Naive thymus-derived CD4-positive, alpha-beta T cell (primary cell): ENCODE measurements at regions of chr7 and their contacts with region 1.

Region 1: DNA sequence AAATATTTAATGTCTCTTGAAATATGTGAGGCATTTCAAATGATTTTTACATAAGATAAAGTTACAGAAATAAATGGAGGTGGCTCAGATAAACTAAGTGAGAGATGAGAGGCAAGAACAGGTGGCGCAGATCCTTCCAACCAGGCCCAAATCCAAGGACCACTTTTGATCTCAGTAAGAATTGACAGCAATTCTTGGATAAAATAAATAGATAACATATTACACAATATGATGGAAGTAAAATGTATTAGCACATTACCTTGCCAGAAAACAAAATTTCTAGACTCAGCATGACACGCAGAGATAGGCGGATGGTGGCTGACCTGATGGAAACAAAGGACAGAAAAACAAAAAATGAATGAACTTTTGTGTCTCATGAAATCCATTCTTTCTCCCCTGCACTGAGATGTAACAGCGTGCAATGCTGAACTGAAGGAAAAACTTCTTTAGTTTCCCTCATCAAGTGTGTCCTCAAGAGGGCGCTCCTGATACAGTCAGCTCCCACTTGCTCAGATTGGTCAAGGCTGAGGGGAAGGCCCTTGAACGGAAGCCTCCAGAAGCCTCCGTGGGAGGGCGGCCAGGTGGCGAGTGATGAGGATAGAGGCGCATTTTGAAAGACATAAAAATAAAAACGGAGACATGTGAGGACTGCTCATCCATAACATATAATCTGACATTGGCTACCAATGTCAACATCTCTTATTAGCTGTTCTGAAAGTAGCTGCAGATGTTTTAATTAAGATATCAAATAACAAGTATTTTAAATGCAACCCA is 62.8 kb upstream of the GSDME start:
- DNase-seq: peak; percentile 33 to 72 (median 68)
- ATAC-seq: peak; percentile 58
- H3K4me3 ChIP-seq: peak overlapping the region; percentile 24
- H3K4me3 Mint-ChIP-seq: peak overlapping the region; percentile 70 to 93 (median 83)
- H3K27ac ChIP-seq: peak overlapping the region; percentile 70
- H3K27ac Mint-ChIP-seq: peak overlapping the region; percentile 91 to 99 (median 94)
- H3K4me1 ChIP-seq: peaks cover 27 to 28% of the 10 kb centered on the region in 2 donors
- H3K4me1 Mint-ChIP-seq: peaks cover 13 to 47% (median 45%) of the 10 kb centered on the region in 7 donors
- H3K27me3 ChIP-seq: no peaks in the 10 kb centered on the region
- H3K27me3 Mint-ChIP-seq: no peaks in the 10 kb centered on the region

Region 2: DNA sequence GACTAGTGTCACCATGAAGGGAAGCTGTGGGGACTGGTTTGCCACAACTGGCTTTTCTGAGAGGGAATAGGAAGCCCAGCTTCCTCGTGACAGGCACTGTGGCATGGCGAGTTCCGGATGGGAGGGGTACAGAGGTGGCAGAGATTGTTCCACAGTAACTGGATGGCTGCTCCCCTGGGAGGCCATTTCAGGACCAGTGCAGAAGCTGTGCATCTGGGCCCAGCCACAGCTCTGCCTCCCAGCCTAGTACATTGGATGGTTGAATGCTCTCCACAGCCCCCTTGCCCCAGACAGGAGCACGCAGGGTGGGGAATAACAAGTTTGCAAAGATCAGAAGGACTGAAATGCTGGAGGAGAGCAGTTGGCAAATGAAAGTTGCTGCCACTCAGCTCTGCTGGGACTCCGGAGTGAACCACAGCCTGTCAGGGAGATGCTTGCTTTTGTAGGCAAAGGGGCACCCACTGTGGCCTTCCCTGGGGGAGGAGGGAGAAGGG is 114.6 kb before region 1 on chr7:
- CTCF ChIA-PET with region 1: no interaction called
- POLR2A ChIA-PET with region 1: no interaction called
- intact Hi-C with region 1: no loop called
- DNase-seq: no peak
- ATAC-seq: peak; percentile 44
- H3K4me3 ChIP-seq: no peak overlapping the region
- H3K4me3 Mint-ChIP-seq: no peak overlapping the region
- H3K27ac ChIP-seq: no peak overlapping the region
- H3K27ac Mint-ChIP-seq: peak overlapping the region in 1 of 9 donors; percentile 36
- H3K4me1 ChIP-seq: no peaks in the 10 kb centered on the region
- H3K4me1 Mint-ChIP-seq: peaks cover 0 to 7% (median 0%) of the 10 kb centered on the region in 7 donors
- H3K27me3 ChIP-seq: no peaks in the 10 kb centered on the region
- H3K27me3 Mint-ChIP-seq: no peaks in the 10 kb centered on the region

Region 3: DNA sequence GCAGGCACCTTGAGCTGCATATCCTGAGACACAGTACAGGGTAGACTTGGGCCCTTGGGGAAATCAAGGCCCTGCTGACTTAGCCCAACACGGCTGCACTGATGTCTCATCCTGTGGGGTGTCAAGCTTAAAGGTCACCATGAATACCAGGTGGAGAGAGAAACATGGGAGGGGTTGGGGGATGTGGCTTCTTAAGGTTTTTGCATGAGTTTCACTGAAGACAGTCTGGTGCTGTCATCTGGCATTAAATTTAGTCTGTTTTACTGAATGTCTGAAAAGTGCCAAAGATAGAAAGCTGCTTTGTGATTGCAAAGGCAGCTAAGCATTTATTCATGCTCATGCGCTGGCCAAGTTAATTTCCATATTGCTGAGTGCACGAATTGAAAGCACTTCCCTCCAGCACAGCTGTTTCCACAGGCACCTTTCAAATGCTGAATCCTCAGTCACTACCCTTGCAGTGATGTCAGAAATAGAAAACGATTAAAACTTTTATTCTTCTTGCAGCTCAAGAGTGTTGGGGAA is 57.7 kb after region 1 on chr7:
- CTCF ChIA-PET with region 1: interaction called, 4 read pairs
- POLR2A ChIA-PET with region 1: no interaction called
- intact Hi-C with region 1: loop called in 1 of 2 experiments (anchors 2 kb)
- DNase-seq: peak in 1 of 9 donors; percentile 24
- ATAC-seq: peak; percentile 42
- H3K4me3 ChIP-seq: no peak overlapping the region
- H3K4me3 Mint-ChIP-seq: peak overlapping the region in 1 of 10 donors; percentile 49
- H3K27ac ChIP-seq: no peak overlapping the region
- H3K27ac Mint-ChIP-seq: peak overlapping the region in 2 of 9 donors; percentile 59 to 72
- H3K4me1 ChIP-seq: no peaks in the 10 kb centered on the region
- H3K4me1 Mint-ChIP-seq: peaks cover 0 to 53% (median 0%) of the 10 kb centered on the region in 7 donors
- H3K27me3 ChIP-seq: no peaks in the 10 kb centered on the region
- H3K27me3 Mint-ChIP-seq: no peaks in the 10 kb centered on the region

Region 4: DNA sequence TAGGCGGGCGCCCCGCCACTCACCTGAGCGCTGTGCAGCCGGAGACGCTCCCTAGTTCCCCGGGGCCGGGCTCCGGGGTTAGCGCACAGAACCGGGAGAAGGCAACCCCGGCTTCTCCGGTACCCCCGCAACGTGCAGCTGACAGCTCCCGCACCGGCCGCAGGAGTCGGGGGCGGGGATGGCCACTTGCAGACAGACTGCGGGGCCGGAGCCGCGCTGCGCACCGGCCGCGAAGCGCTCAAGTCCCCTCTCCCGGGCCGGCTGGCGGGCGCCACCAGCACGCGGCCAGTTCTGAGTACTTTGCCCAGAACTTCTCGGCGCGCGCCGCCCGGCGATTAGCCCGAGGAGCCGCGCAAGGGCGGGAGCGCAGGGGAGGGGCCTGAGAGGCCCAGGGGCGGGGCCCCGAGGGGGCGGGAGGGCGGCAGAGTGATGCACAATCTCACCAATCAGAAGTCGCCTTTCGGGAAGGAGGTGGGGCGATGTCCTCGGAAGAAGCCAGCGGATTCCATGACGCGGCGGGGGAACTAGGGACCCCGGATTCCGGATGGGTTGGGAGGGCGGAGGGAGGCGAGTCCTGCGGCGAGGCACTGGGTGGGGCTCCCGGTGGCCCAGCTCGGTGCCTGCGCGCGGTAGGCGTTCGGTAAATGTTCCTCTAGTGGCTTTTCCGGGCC is 159.9 kb after region 1 on chr7 and contains the start of gene OSBPL3:
- CTCF ChIA-PET with region 1: interaction called, 44 read pairs
- POLR2A ChIA-PET with region 1: interaction called, 25 read pairs
- intact Hi-C with region 1: loop called (anchors 1 kb)
- DNase-seq: peak; percentile 86 to 96 (median 93)
- ATAC-seq: peak; percentile 95
- H3K4me3 ChIP-seq: peak within 1 kb of the TSS; percentile 84
- H3K4me3 Mint-ChIP-seq: peak within 1 kb of the TSS; percentile 93 to 97 (median 96)
- H3K27ac ChIP-seq: peak within 1 kb of the TSS; percentile 69
- H3K27ac Mint-ChIP-seq: peak within 1 kb of the TSS; percentile 73 to 95 (median 89)
- H3K4me1 ChIP-seq: peaks cover 26 to 32% of the 10 kb centered on the region in 2 donors
- H3K4me1 Mint-ChIP-seq: peaks cover 40 to 65% (median 56%) of the 10 kb centered on the region in 7 donors
- H3K27me3 ChIP-seq: no peaks in the 10 kb centered on the region
- H3K27me3 Mint-ChIP-seq: peaks cover 0 to 4% (median 0%) of the 10 kb centered on the region in 5 donors
- total RNA-seq, gene OSBPL3: 17.1 to 75.7 (median 22.7) TPM

Region 5: DNA sequence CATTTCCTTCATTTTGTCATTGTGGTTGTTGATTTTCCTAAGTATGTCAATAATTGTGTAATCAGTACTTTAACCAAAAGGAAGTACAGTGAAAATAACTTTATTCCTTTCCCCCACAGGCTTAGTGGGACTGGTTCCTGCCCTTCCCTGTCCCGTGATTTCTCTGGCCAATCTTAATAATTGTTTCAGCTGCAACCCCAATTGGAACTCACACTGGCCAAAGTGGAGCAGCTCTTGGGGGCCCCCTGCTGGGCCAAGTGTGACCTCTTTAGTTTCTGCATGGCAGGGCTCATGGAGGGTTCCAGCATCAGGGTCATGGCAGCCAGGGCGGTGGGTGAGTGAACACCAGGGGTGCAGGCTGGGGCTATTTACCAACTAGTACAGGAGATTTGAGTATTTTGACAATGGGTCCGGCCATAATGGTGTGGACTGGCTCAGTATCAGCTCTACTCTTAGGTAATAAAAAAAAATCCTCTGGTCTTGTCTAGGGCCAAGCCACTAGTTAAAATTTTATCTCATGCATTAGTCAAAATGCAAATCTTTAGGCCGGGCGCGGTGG is 273.2 kb after region 1 on chr7:
- CTCF ChIA-PET with region 1: interaction called, 33 read pairs
- POLR2A ChIA-PET with region 1: interaction called, 3 read pairs
- intact Hi-C with region 1: loop called (anchors 1 kb)
- DNase-seq: peak; percentile 33 to 80 (median 60)
- ATAC-seq: peak; percentile 90
- H3K4me3 ChIP-seq: no peak overlapping the region
- H3K4me3 Mint-ChIP-seq: no peak overlapping the region
- H3K27ac ChIP-seq: no peak overlapping the region
- H3K27ac Mint-ChIP-seq: no peak overlapping the region
- H3K4me1 ChIP-seq: no peaks in the 10 kb centered on the region
- H3K4me1 Mint-ChIP-seq: peaks cover 0 to 15% (median 8%) of the 10 kb centered on the region in 7 donors
- H3K27me3 ChIP-seq: no peaks in the 10 kb centered on the region
- H3K27me3 Mint-ChIP-seq: peaks cover 0 to 14% (median 0%) of the 10 kb centered on the region in 5 donors

Region 6: GRCh38 chr7:25158966-25159365 is 338.9 kb after region 1 on chr7:
- CTCF ChIA-PET with region 1: no interaction called
- POLR2A ChIA-PET with region 1: no interaction called
- intact Hi-C with region 1: loop called in 1 of 2 experiments (anchors 2 kb)
- DNase-seq: no peak
- ATAC-seq: no peak
- H3K4me3 ChIP-seq: no peak overlapping the region
- H3K4me3 Mint-ChIP-seq: no peak overlapping the region
- H3K27ac ChIP-seq: no peak overlapping the region
- H3K27ac Mint-ChIP-seq: no peak overlapping the region
- H3K4me1 ChIP-seq: no peaks in the 10 kb centered on the region
- H3K4me1 Mint-ChIP-seq: peaks cover 0 to 5% (median 4%) of the 10 kb centered on the region in 7 donors
- H3K27me3 ChIP-seq: no peaks in the 10 kb centered on the region
- H3K27me3 Mint-ChIP-seq: no peaks in the 10 kb centered on the region